ENCODE measurements at regions of chr1 and their contacts with region 1.

Region 1: DNA sequence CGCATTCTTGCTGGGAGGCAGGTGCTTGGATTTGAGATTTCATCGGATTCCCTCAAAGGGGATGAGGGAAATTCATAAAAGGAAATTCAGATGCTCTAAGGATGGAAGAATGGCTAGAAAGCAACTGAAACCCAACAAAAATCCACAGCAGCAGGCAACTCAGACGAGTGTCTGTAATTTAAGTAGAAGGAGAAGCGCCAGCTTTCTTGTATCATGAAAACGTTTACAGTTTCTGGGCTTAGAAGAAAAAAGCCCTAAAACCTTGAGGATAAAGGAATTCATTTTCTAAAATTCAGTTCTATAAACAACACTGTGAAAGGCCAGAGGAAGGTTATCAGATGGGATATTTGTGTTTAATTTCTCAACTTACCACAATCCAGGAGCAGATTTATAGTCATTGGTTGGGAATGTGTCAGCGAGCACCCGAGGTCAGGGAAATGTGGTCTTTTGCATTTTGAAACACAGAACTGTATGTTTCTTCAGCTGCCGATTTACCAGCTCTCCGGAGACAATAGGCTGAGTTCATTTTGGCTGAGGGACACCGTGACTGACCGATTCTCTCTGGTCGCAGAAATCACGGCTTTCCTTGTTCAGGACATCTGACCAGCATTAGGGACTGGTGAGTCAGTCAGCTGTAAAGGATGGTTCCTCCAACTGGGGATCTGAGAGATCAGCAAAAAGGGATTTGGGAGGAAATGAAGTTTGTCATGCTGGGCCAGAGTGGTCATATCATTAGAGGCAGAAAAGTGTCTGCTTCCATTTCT is 111.6 kb upstream of the ERRFI1 start:
- DNase-seq: peak; percentile 97
- ATAC-seq: peak; percentile 75
- H3K4me3 ChIP-seq: no peak overlapping the region; the same call in 1 of the 2 replicates
- H3K27ac ChIP-seq: peak overlapping the region; percentile 96
- H3K4me1 ChIP-seq: peaks cover 23% of the 10 kb centered on the region
- H3K27me3 ChIP-seq: no peaks in the 10 kb centered on the region; the same call in 1 of the 2 replicates
- CTCF ChIP-seq: no peak
- POLR2A ChIP-seq: no peak
- RAD21 ChIP-seq: peak; percentile 21; the same call in 1 of the 2 replicates

Region 2: GRCh38 chr1:7961216-7962015 is 176.2 kb before region 1 on chr1 and contains the start of gene PARK7:
- CTCF ChIA-PET with region 1: no interaction called
- POLR2A ChIA-PET with region 1: interaction called, 17 read pairs
- dilution Hi-C with region 1: no loop called
- in situ Hi-C with region 1: no loop called
- intact Hi-C with region 1: no loop called
- DNase-seq: peak; percentile 99
- ATAC-seq: peak; percentile 99
- H3K4me3 ChIP-seq: peak within 1 kb of the TSS; percentile 79
- H3K27ac ChIP-seq: peak within 1 kb of the TSS; percentile 82
- H3K4me1 ChIP-seq: no peaks in the 10 kb centered on the region
- H3K27me3 ChIP-seq: no peaks in the 10 kb centered on the region
- CTCF ChIP-seq: peak; percentile 67
- POLR2A ChIP-seq: peak; percentile 98
- RAD21 ChIP-seq: peak; percentile 55
- total RNA-seq, gene PARK7: 207 and 384 TPM in 2 replicates

Region 3: GRCh38 chr1:8211589-8212442 is 74.2 kb after region 1 on chr1:
- CTCF ChIA-PET with region 1: no interaction called
- POLR2A ChIA-PET with region 1: interaction called, 4 read pairs
- dilution Hi-C with region 1: no loop called
- in situ Hi-C with region 1: no loop called
- intact Hi-C with region 1: loop called (anchors 2 kb)
- DNase-seq: peak; percentile 99
- ATAC-seq: peak; percentile 80
- H3K4me3 ChIP-seq: no peak overlapping the region
- H3K27ac ChIP-seq: peak overlapping the region; percentile 86
- H3K4me1 ChIP-seq: peaks cover 37% of the 10 kb centered on the region
- H3K27me3 ChIP-seq: no peaks in the 10 kb centered on the region
- CTCF ChIP-seq: no peak
- POLR2A ChIP-seq: peak; percentile 45
- RAD21 ChIP-seq: peak; percentile 30

Region 4: DNA sequence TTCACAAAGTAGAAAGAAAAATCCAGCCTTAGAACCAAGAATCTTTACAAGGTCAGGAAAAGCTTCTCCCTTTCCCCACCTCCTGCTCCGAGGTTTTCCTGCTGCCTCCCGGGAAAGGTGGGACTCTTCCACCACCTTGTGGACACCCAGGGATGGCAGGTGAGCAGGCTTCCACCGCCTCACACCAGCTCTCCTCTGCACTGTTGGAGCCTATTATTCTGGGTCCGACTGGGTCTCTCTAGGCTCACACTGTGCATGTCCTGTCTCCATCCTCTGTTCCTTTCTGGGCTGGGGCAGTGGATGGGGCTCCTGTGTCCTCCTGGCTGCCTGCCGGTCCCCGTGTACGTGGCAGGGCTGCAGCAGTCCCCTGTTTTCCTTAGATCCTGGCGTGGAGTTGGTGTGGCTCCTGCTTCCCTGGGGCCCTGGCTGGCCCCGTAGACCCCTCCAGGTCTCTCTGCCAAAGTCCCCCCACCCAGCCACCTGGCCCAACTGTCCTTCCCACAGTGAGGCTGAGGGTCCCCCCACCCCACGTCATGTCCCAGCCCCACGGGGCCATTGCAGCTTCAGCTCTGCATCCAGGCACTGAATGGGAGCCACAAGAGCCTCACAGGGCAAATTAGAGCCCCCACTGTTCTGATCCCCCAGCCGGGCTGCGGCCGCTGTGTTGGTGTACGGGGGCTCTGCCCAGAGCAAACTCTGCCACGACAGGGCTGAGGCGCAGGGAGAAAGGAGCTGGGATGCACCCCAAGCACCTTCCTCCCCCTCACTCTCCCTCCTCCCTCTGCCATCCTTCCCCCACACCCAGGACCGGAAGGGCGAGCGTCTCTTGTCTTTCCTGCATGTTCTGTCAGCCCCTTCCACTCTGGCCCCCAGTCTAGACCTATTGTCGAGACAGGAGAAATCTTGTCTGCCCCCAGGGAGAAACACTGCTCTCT is 176.9 kb after region 1 on chr1:
- CTCF ChIA-PET with region 1: interaction called, 3 read pairs
- POLR2A ChIA-PET with region 1: no interaction called
- dilution Hi-C with region 1: no loop called
- in situ Hi-C with region 1: no loop called
- intact Hi-C with region 1: loop called (anchors 2 kb)
- DNase-seq: peak; percentile 77
- ATAC-seq: peak; percentile 86
- H3K4me3 ChIP-seq: no peak overlapping the region
- H3K27ac ChIP-seq: no peak overlapping the region; the same call in 1 of the 2 replicates
- H3K4me1 ChIP-seq: peaks cover 10% of the 10 kb centered on the region
- H3K27me3 ChIP-seq: no peaks in the 10 kb centered on the region
- CTCF ChIP-seq: peak; percentile 98
- POLR2A ChIP-seq: peak; percentile 70
- RAD21 ChIP-seq: peak; percentile 100